ENCODE measurements at regions of chr10 and their contacts with region 1.

Region 1: DNA sequence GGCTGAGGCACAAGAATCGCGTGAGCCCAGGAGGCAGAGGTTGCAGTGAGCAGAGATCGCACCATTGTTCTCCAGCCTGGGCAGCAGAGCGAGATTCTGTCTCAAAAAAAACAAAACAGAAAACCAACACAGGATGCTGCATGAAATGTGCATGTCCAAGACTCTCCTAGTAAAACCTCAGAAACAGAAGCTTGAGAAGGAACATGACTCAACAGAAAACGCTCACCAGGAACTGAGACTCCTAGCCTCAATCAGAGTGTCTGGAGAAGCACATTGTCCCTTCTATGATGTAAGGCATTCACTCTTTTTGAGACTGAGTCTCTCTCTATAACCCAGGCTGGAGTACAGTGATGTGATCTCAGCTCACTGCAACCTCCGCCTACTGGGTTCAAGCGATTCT is 168.3 kb downstream of the MYOF start:
- DNase-seq: peak; percentile 34
- ATAC-seq: peak; percentile 54
- H3K4me3 ChIP-seq: no peak overlapping the region
- H3K27ac ChIP-seq: peak overlapping the region; percentile 46
- H3K4me1 ChIP-seq: peaks cover 23% of the 10 kb centered on the region
- H3K27me3 ChIP-seq: no peaks in the 10 kb centered on the region
- CTCF ChIP-seq: no peak
- EP300 ChIP-seq: no peak
- POLR2A ChIP-seq: no peak
- RAD21 ChIP-seq: no peak

Region 2: DNA sequence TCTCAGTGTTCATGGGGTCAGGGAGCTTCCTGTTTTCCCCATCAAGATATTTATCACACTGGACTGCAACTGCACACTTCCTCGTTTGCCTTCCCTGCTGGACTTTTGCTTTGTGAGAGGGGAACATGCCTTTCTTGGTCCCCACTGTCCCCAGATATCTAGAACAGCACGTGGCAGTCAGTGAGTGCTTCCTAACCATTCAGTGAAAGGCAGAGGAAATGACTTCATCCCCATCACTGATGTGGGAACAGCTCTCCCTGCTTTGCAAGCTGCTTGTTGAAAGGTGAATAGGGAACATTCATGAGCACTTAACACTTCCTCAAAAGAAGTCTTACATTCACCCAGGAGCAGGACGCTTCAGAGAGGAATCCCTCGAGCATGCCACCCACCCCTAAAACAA is 32.9 kb after region 1 on chr10:
- CTCF ChIA-PET with region 1: no interaction called
- POLR2A ChIA-PET with region 1: no interaction called
- RAD21 ChIA-PET with region 1: no interaction called
- SMC1A ChIA-PET with region 1: no interaction called
- in situ Hi-C with region 1: no loop called
- intact Hi-C with region 1: loop called (anchors 5 kb)
- DNase-seq: no peak
- ATAC-seq: no peak
- H3K4me3 ChIP-seq: no peak overlapping the region
- H3K27ac ChIP-seq: no peak overlapping the region
- H3K4me1 ChIP-seq: peaks cover 12% of the 10 kb centered on the region
- H3K27me3 ChIP-seq: no peaks in the 10 kb centered on the region; a peak in 1 of 4 replicates
- CTCF ChIP-seq: no peak
- EP300 ChIP-seq: no peak
- POLR2A ChIP-seq: no peak
- RAD21 ChIP-seq: no peak